Activated T-helper 1 cell treated with anti-CD3 and anti-CD28 coated beads, Interleukin-12 subunit alpha, Interleukin-12 subunit beta, Interleukin-2, Interleukin-4 antibody, amounts not matched to agents 30 ng/mL and 10 ng/mL and 1 ng/mL, durations not matched to agents 14 hours and 24 hours and 36 hours (primary cell): ENCODE measurements at regions of chr6 and their contacts with region 1.

Region 1: GRCh38 chr6:100001915-100002388 is 7.9 kb upstream of the MCHR2 start:
- DNase-seq: no peak
- H3K4me3 Mint-ChIP-seq: no peak overlapping the region
- H3K27ac Mint-ChIP-seq: no peak overlapping the region
- H3K4me1 Mint-ChIP-seq: no peaks in the 10 kb centered on the region
- H3K27me3 Mint-ChIP-seq: peaks cover 13% of the 10 kb centered on the region

Region 2: DNA sequence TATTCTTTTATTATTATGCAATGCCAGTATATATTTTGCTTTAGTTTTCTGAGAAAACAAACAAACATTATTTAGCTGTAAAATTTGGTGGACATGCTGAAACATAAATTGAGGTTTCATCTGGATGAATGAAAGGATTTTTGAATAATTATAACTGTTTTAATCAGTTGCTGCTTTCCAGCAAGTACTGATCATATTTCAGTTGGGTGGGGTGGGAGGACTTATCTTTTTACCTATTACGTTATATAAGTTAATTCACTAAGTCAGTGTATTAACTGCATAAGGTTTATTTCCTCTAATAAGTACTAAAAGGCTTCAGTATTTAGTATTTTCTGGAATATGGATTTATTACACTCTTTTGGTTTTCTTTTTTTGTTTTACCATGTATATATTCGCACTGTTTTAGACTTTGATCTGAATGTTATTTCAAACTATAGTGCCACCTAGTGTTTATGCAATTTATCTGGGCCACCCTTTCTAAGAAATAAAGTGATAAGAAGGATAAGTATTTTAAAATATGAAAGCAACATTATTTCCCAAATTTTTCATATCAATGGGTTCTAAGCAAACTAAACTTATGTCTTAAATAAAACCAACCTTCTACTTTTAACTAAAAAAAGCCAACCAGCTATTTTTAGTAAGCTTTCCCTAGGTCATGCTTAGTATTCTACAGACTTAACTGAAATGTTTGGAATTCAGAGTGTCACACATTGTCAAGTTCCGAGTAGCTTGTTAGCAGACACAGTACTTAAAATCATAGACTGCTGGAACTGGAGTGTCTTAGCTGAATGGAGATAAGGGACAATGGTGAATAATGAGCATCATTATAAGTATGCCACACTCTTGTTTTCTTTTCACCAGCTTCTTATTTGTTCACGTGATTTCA is 97.5 kb after region 1 on chr6:
- intact Hi-C with region 1: loop called (anchors 1 kb)
- DNase-seq: no peak
- H3K4me3 Mint-ChIP-seq: no peak overlapping the region
- H3K27ac Mint-ChIP-seq: no peak overlapping the region
- H3K4me1 Mint-ChIP-seq: no peaks in the 10 kb centered on the region
- H3K27me3 Mint-ChIP-seq: peaks cover 21% of the 10 kb centered on the region

Region 3: GRCh38 chr6:100664274-100665040 is 662.5 kb after region 1 on chr6:
- intact Hi-C with region 1: loop called (anchors 2 kb)
- DNase-seq: no peak
- H3K4me3 Mint-ChIP-seq: no peak overlapping the region
- H3K27ac Mint-ChIP-seq: peak overlapping the region; percentile 32
- H3K4me1 Mint-ChIP-seq: peaks cover 10% of the 10 kb centered on the region
- H3K27me3 Mint-ChIP-seq: no peaks in the 10 kb centered on the region